Common myeloid progenitor, CD34-positive (primary cell): ENCODE measurements at regions of chr16 and their contacts with region 1.

Region 1: DNA sequence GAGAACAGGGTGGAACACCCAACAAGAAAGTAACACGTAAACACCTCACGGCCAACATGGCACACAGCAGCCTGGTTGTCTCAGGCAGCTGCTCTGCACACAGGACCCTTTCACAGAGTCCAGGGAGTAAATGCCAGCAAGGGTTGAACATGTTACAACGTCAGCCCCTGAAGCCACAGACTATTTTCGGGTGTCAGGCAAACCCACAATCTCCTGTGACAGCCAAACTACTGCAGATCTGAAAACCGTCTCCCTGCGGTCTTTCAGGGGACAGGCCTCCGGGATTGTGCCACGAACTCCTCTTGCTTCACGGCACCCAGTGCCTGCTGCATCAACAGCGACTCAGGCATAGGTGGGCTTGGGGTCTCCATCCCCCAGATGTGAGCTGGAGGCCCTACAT is 127.7 kb downstream of the XYLT1 start:
- DNase-seq: peak; percentile 93 to 99 (median 98)
- H3K4me3 ChIP-seq: peak overlapping the region in 3 of 7 experiments; percentile 25 to 47 (median 28)
- H3K27ac ChIP-seq: peak overlapping the region; percentile 78 to 88
- H3K4me1 ChIP-seq: peaks cover 34 to 81% (median 80%) of the 10 kb centered on the region in 4 experiments
- H3K27me3 ChIP-seq: no peaks in the 10 kb centered on the region

Region 2: GRCh38 chr16:17134586-17134985 is 208.4 kb before region 1 on chr16:
- CTCF ChIA-PET with region 1: no interaction called
- POLR2A ChIA-PET with region 1: no interaction called
- DNase-seq: no peak
- H3K4me3 ChIP-seq: no peak overlapping the region
- H3K27ac ChIP-seq: no peak overlapping the region
- H3K4me1 ChIP-seq: peaks cover 4 to 8% (median 6%) of the 10 kb centered on the region in 4 experiments
- H3K27me3 ChIP-seq: no peaks in the 10 kb centered on the region

Region 3: DNA sequence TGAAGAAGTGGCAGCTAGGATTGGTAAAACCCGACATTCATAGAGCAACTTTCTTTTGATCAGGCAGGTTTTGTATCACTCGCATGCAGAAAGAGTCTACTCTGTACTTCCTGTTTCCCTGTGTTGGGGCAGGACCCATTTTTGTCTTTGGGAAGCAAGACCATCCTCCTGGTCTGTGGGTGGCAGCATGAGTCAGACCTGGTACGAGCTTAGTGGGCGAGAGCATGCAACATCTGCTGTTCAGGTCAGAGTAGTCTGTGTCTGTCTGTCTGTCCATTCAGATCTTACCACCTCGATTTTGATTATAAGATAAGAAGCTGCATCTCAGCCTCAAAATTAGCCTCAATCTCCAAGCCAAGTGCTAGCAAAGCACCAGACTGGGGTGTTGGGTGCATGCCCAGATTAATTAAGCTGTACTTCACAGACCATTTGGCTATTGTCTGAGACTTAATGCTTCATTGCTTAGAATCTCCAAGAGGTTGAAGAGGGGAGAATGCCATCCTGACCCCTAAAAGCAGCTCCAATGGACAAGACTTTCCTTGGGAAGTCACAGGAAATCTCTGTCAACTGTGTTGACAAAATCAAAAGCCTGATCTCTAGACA is 16.9 kb after region 1 on chr16:
- CTCF ChIA-PET with region 1: interaction called, 30 read pairs
- POLR2A ChIA-PET with region 1: interaction called, 3 read pairs
- DNase-seq: peak in 2 of 3 donors; percentile 89 to 93
- H3K4me3 ChIP-seq: no peak overlapping the region
- H3K27ac ChIP-seq: no peak overlapping the region
- H3K4me1 ChIP-seq: peaks cover 31 to 67% (median 59%) of the 10 kb centered on the region in 4 experiments
- H3K27me3 ChIP-seq: no peaks in the 10 kb centered on the region

Region 4: DNA sequence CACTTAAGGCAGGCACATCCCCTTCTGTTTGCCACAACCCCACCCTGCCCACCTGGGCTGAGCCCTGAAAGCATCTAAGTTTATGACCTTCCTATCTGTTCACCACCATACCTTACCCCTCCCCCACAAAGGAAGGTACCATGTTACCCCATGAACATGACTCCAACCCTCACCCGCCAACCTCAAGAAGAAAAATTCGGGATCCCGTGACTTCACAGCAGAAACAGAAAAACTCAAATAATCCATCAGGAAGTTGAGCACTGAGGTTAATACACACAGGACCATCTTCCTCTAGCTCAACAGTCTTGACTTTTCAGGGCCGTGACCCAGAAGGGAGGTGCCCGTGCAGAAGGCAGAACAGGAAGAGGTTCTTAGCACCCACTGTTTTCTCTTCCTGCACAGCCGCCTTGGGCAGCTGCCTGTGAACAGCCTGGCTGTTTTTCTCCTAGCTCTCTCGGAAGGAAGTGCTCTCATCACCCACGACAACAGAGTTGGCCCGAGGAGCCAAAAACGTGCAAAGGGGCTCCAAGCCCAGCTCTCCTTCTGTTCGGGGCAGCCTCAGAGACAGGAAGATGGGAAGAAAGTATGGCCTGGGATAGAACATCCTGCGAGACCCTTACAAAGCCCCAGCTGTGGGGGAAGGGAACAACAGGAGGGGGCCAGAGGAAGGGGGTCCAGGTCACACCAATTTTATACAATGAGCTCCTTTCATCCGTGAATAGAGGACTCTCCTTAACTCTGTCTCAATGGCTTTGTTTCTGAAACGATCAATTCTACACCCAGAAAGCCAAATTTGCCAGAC is 26.6 kb after region 1 on chr16:
- CTCF ChIA-PET with region 1: interaction called, 11 read pairs
- POLR2A ChIA-PET with region 1: interaction called, 9 read pairs
- DNase-seq: peak in 2 of 3 donors; percentile 78 to 86
- H3K4me3 ChIP-seq: peak overlapping the region in 5 of 7 experiments; percentile 9 to 48 (median 23)
- H3K27ac ChIP-seq: peak overlapping the region; percentile 48 to 73
- H3K4me1 ChIP-seq: peaks cover 33 to 90% (median 78%) of the 10 kb centered on the region in 4 experiments
- H3K27me3 ChIP-seq: no peaks in the 10 kb centered on the region

Region 5: DNA sequence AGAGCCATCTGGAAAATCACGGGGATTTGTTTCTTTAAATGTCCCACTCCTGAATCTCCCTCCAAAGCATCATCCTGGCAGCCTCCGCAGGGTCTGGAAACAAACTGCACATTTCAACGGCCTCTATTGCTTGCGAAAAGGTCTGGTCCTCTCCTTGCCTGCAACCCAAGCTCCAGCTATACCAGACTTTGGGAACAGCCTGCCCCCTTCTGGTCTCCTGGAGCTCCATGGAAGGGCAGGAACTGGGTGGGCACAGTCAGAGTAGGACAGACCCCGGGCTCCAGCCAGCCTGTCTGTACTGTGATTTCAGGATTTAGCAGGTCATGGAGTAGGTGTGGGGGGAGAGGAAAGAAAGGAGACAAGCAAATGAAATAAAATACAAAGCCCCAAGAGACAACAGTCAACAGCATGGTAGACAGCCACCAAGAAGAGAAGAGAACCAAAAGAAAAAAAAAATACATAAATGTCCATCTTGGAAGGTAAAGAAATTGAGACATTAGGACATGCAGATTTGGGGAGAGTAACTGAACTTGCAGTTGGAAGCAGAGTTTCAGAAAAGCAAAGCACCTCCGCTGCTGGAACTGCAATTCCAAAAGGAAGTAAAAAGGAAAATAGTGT is 125.0 kb after region 1 on chr16:
- CTCF ChIA-PET with region 1: interaction called, 21 read pairs
- POLR2A ChIA-PET with region 1: interaction called, 3 read pairs
- DNase-seq: peak; percentile 54 to 61 (median 58)
- H3K4me3 ChIP-seq: peak overlapping the region in 6 of 7 experiments; percentile 40 to 93 (median 79)
- H3K27ac ChIP-seq: no peak overlapping the region
- H3K4me1 ChIP-seq: peaks cover 19 to 80% (median 62%) of the 10 kb centered on the region in 4 experiments
- H3K27me3 ChIP-seq: no peaks in the 10 kb centered on the region